ENCODE measurements at regions of chr7 and their contacts with region 1.

Region 1: DNA sequence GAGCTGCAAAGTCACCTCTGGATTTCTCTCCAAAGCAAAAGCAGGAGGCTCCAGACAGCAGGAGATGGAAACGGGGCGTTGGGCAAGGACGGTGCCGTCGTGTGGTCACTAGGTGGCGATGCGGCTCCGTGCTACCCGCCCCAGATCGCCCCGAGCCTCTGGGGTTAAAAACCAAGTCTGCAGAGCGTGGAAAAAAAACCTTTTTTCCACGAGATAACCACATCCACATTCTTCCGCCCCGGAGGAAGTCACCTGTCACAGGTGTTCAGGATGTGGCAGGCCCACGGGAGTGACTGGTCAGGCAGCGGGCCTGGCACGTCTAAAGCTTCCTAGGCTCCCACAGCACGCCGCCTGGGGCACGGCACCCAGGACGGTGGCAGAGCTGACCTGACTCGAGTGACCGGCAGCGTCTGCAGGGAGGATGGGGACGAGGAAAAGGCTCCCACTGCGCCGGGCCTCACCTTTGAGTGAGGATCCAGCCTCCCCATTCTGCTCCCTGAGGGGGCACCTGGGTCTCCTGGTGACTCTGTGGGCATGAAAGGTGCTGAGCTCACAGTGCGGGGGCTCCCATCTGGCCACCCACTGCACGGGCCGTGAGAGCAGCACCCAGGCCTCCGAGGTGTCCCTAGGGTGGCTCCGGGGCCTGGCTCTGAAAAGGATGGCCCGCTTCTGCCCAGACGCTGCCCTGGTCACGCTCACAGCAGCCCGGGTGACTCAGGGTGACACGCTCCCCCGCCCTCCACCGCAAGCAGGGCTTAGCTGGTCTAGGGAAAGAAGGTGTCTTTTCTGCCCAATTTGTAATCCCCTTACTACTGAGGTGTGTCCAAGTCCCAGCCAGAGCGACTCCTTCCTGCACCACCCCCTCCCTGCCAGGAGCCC is 71.3 kb upstream of the TNRC18 start:
- DNase-seq: no peak
- ATAC-seq: peak; percentile 94
- H3K4me3 ChIP-seq: peak overlapping the region; percentile 53; the same call in 1 of the 2 replicates
- H3K27ac ChIP-seq: no peak overlapping the region
- H3K4me1 ChIP-seq: peaks cover 12% of the 10 kb centered on the region
- H3K27me3 ChIP-seq: no peaks in the 10 kb centered on the region
- CTCF ChIP-seq: peak; percentile 94 to 99 (median 96); a peak in 5 of 6 replicates
- EP300 ChIP-seq: peak in 1 of 2 experiments; percentile 24; a peak in 1 of 4 replicates
- POLR2A ChIP-seq: peak; percentile 21; the same call in 1 of the 2 replicates
- RAD21 ChIP-seq: peak; percentile 88

Region 2: GRCh38 chr7:5441840-5442503 is 53.0 kb before region 1 on chr7:
- CTCF ChIA-PET with region 1: no interaction called
- POLR2A ChIA-PET with region 1: no interaction called
- RAD21 ChIA-PET with region 1: no interaction called
- SMC1A ChIA-PET with region 1: no interaction called
- in situ Hi-C with region 1: no loop called
- intact Hi-C with region 1: no loop called
- DNase-seq: no peak
- ATAC-seq: no peak
- H3K4me3 ChIP-seq: no peak overlapping the region
- H3K27ac ChIP-seq: no peak overlapping the region
- H3K4me1 ChIP-seq: no peaks in the 10 kb centered on the region
- H3K27me3 ChIP-seq: no peaks in the 10 kb centered on the region; a peak in 2 of 4 replicates
- CTCF ChIP-seq: no peak
- EP300 ChIP-seq: no peak
- POLR2A ChIP-seq: no peak
- RAD21 ChIP-seq: no peak

Region 3: DNA sequence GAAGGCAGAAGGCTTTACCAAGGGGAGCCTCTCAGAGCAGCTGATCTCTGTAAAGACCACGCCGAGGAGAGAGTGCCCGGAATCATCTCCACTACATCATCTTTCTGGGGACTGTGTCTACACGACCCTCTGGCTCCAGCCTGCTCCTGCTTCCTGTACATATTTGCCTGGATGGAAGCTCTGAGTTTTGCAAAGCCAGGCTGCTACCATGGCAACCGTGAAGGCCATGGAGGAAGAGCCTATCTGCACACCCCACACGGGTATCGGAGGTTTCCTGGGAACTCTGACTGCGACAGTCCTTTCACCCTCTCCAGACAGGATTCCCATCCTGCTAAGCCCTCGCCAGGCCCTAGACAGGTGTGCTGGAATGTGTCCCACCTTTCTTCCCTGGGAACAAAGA is 12.1 kb after region 1 on chr7:
- CTCF ChIA-PET with region 1: interaction called, 10 read pairs
- POLR2A ChIA-PET with region 1: no interaction called
- RAD21 ChIA-PET with region 1: interaction called, 6 read pairs
- SMC1A ChIA-PET with region 1: interaction called, 4 read pairs
- in situ Hi-C with region 1: no loop called
- intact Hi-C with region 1: no loop called
- DNase-seq: no peak
- ATAC-seq: no peak
- H3K4me3 ChIP-seq: no peak overlapping the region
- H3K27ac ChIP-seq: no peak overlapping the region
- H3K4me1 ChIP-seq: peaks cover 3% of the 10 kb centered on the region; the same call in 1 of the 2 replicates
- H3K27me3 ChIP-seq: no peaks in the 10 kb centered on the region
- CTCF ChIP-seq: no peak
- EP300 ChIP-seq: no peak
- POLR2A ChIP-seq: no peak
- RAD21 ChIP-seq: no peak

Region 4: GRCh38 chr7:5526100-5526905 is 31.4 kb after region 1 on chr7:
- CTCF ChIA-PET with region 1: interaction called, 8 read pairs
- POLR2A ChIA-PET with region 1: no interaction called
- RAD21 ChIA-PET with region 1: interaction called, 14 read pairs
- SMC1A ChIA-PET with region 1: interaction called, 11 read pairs
- in situ Hi-C with region 1: no loop called
- intact Hi-C with region 1: loop called (anchors 1 kb)
- DNase-seq: no peak
- ATAC-seq: peak; percentile 4
- H3K4me3 ChIP-seq: peak overlapping the region; percentile 99; the same call in 1 of the 2 replicates
- H3K27ac ChIP-seq: peak overlapping the region; percentile 3
- H3K4me1 ChIP-seq: peaks cover 5% of the 10 kb centered on the region
- H3K27me3 ChIP-seq: no peaks in the 10 kb centered on the region
- CTCF ChIP-seq: peak in 1 of 3 experiments; percentile 31; a peak in 2 of 6 replicates
- EP300 ChIP-seq: no peak
- POLR2A ChIP-seq: no peak
- RAD21 ChIP-seq: 0 out of 2 replicates have a peak, but pooled peaks have one; percentile 1

Region 5: DNA sequence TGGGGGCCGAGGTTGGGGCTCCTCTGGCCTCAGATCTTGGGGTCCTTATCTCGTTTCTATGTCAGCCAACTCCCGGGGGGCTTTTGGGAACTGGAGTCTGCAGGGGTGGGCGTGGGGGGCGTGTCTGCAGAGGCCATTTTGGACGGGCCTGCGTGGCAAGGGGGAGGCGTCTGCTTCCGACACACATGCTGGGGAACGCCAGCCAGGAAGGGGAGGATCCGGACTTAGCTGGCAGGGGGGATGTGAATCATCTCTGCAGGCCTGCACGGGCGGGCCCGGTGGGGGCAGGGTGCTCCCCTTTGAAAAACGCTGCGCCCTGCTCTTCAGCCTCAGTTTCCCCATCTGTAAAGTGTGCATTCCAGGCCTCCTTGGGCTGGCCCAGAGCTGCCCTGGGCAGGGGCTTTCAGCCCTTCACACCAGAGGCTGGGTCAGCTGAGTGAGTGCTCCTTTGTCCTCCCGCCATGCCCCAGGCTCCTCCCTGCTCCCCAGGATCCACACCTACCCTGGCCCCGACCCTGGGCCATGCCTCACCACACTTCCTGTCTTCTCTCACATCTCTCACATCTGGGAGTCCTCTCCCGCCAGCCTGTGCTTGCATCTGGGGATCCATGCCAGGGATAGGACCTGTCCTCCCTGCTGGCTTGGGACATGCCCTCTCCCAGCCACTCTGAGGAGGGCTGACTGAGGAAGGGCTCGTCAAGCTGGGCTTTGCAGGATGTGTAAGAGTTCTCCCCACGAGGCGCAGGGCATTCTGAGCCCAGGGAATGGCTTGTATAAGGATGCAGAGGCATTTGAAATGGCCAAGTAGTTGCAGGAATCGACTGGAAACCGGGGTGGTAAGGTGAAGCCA is 101.3 kb after region 1 on chr7:
- CTCF ChIA-PET with region 1: interaction called, 3 read pairs
- POLR2A ChIA-PET with region 1: no interaction called
- RAD21 ChIA-PET with region 1: interaction called, 3 read pairs
- SMC1A ChIA-PET with region 1: interaction called, 13 read pairs
- in situ Hi-C with region 1: no loop called
- intact Hi-C with region 1: no loop called
- DNase-seq: no peak
- ATAC-seq: peak; percentile 55
- H3K4me3 ChIP-seq: peak overlapping the region; percentile 99
- H3K27ac ChIP-seq: peak overlapping the region; percentile 79
- H3K4me1 ChIP-seq: peaks cover 37% of the 10 kb centered on the region
- H3K27me3 ChIP-seq: no peaks in the 10 kb centered on the region
- CTCF ChIP-seq: no peak
- EP300 ChIP-seq: no peak
- POLR2A ChIP-seq: peak; percentile 43; the same call in 1 of the 2 replicates
- RAD21 ChIP-seq: no peak

Region 6: DNA sequence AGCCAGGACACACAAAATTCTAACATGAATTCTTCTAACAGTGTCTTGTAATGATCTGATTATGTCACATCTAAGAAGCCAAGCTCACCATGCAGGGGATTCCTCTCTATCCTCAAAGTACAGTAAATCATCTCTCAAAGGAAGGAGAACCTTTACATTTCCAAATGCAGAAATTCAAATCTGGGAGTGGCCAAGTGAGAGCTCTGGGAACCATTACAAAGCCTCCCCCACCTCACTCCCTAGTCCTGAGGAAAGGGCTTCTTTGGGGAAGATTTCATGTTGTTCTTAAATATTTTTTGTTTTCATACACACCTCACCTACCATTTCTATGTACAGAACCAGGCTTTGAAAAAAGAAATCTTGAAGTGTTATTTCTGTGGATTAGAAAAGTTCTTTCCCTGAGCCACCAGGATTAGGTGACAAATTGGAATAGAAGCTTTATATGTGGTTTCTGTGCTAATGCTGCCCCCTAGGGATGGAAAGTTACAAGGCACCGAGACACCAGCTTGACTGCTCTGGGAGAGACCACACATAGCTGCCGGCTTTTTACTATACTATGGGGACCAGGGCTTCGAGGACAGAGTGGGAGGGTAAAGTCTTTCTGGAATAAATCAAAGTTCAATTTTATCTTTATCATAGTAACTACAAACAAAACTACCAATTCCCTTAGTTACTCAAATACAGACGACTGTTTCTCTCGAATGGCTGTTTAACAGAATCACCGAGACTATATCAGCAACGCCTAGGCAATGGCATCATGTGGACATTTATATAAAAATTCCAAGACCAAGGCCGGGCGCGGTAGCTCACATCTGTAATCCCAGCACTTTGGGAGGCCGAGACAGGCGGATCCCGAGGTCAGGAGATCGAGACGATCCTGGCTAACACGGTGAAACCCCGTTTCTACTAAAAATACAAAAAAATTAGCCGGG is 170.4 kb after region 1 on chr7:
- CTCF ChIA-PET with region 1: interaction called, 112 read pairs
- POLR2A ChIA-PET with region 1: interaction called, 7 read pairs
- RAD21 ChIA-PET with region 1: interaction called, 48 read pairs
- SMC1A ChIA-PET with region 1: interaction called, 54 read pairs
- in situ Hi-C with region 1: loop called (anchors 5 kb)
- intact Hi-C with region 1: loop called (anchors 1 kb)
- DNase-seq: peak; percentile 53
- ATAC-seq: peak; percentile 94
- H3K4me3 ChIP-seq: no peak overlapping the region
- H3K27ac ChIP-seq: no peak overlapping the region
- H3K4me1 ChIP-seq: peaks cover 12% of the 10 kb centered on the region
- H3K27me3 ChIP-seq: no peaks in the 10 kb centered on the region
- CTCF ChIP-seq: peak; percentile 71 to 90 (median 82)
- EP300 ChIP-seq: no peak
- POLR2A ChIP-seq: no peak
- RAD21 ChIP-seq: peak; percentile 88

Region 7: DNA sequence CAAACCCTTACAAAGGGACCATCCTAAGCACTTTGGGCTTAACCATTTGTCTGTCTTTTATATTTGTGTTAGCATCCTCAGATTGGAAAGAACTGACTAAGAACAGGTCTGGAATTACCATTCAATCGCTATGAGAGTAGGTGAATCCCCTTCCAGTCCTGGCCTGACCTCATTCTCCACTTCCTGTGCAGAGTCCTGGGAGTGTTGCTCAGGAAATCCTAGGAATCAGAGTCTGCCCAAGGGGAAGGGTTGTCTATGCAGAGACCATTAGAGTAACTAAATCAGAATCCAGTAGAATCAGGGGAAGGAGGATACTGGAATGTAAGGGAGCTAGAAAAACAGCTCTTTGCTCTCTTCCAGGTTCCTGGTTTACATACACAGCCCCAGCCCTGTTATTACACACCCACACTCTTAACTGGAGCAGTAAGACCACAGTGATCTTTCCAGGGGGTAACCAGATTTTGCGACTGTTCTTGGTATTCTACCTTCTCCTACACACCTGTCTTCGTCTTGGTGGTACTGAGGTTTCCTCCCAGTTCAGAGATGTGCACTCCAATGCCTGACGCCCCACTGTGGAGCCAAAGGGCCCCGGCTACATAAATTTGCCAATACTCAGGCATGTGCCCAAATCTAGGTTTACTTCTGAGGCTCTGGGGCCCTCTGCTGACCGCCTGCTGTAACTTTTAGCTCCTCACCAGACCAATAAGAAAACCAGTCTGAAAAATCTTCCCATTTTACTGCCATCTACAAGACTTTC is 182.8 kb after region 1 on chr7:
- CTCF ChIA-PET with region 1: interaction called, 42 read pairs
- POLR2A ChIA-PET with region 1: interaction called, 7 read pairs
- RAD21 ChIA-PET with region 1: interaction called, 35 read pairs
- SMC1A ChIA-PET with region 1: interaction called, 35 read pairs
- in situ Hi-C with region 1: no loop called
- intact Hi-C with region 1: no loop called
- DNase-seq: no peak
- ATAC-seq: peak; percentile 81
- H3K4me3 ChIP-seq: no peak overlapping the region
- H3K27ac ChIP-seq: peak overlapping the region; percentile 10
- H3K4me1 ChIP-seq: peaks cover 50% of the 10 kb centered on the region
- H3K27me3 ChIP-seq: no peaks in the 10 kb centered on the region
- CTCF ChIP-seq: peak; percentile 68 to 74 (median 69)
- EP300 ChIP-seq: no peak
- POLR2A ChIP-seq: no peak
- RAD21 ChIP-seq: peak; percentile 77

Region 8: GRCh38 chr7:5694912-5695726 is 200.2 kb after region 1 on chr7:
- CTCF ChIA-PET with region 1: interaction called, 93 read pairs
- POLR2A ChIA-PET with region 1: no interaction called
- RAD21 ChIA-PET with region 1: interaction called, 5 read pairs
- SMC1A ChIA-PET with region 1: interaction called, 24 read pairs
- in situ Hi-C with region 1: loop called (anchors 10 kb)
- intact Hi-C with region 1: no loop called
- DNase-seq: peak; percentile 94
- ATAC-seq: peak; percentile 67
- H3K4me3 ChIP-seq: peak overlapping the region; percentile 49
- H3K27ac ChIP-seq: peak overlapping the region; percentile 94
- H3K4me1 ChIP-seq: peaks cover 89% of the 10 kb centered on the region
- H3K27me3 ChIP-seq: no peaks in the 10 kb centered on the region
- CTCF ChIP-seq: no peak
- EP300 ChIP-seq: peak; percentile 79 to 86
- POLR2A ChIP-seq: peak; percentile 97
- RAD21 ChIP-seq: peak; percentile 17; the same call in 1 of the 2 replicates